HepG2 (cell line): ENCODE measurements at regions of chr7 and their contacts with region 1.

Region 1: GRCh38 chr7:37234928-37235327 is 213.7 kb downstream of the ELMO1 start:
- DNase-seq: peak; percentile 6
- ATAC-seq: 0 out of 3 replicates have a peak, but pooled peaks have one; percentile 33
- H3K4me3 ChIP-seq: no peak overlapping the region
- H3K27ac ChIP-seq: no peak overlapping the region
- H3K4me1 ChIP-seq: no peaks in the 10 kb centered on the region
- H3K27me3 ChIP-seq: peaks cover 0 to 3% of the 10 kb centered on the region in 2 experiments; a peak in 1 of 5 replicates
- CTCF ChIP-seq: peak; percentile 58
- EP300 ChIP-seq: no peak
- POLR2A ChIP-seq: no peak
- RAD21 ChIP-seq: no peak

Region 2: GRCh38 chr7:37247861-37248260 is 12.9 kb after region 1 on chr7:
- CTCF ChIA-PET with region 1: no interaction called
- POLR2A ChIA-PET with region 1: no interaction called
- in situ Hi-C with region 1: no loop called
- intact Hi-C with region 1: no loop called
- DNase-seq: no peak
- ATAC-seq: no peak
- H3K4me3 ChIP-seq: no peak overlapping the region
- H3K27ac ChIP-seq: no peak overlapping the region
- H3K4me1 ChIP-seq: no peaks in the 10 kb centered on the region
- H3K27me3 ChIP-seq: no peaks in the 10 kb centered on the region
- CTCF ChIP-seq: no peak
- EP300 ChIP-seq: no peak
- POLR2A ChIP-seq: no peak
- RAD21 ChIP-seq: no peak

Region 3: GRCh38 chr7:37352974-37353948 is 118.3 kb after region 1 on chr7:
- CTCF ChIA-PET with region 1: no interaction called
- POLR2A ChIA-PET with region 1: no interaction called
- in situ Hi-C with region 1: no loop called
- intact Hi-C with region 1: loop called (anchors 10 kb)
- DNase-seq: no peak
- ATAC-seq: peak; percentile 63
- H3K4me3 ChIP-seq: no peak overlapping the region
- H3K27ac ChIP-seq: no peak overlapping the region
- H3K4me1 ChIP-seq: peaks cover 7% of the 10 kb centered on the region; the same call in 1 of the 2 replicates
- H3K27me3 ChIP-seq: no peaks in the 10 kb centered on the region; a peak in 1 of 5 replicates
- CTCF ChIP-seq: peak; percentile 47
- EP300 ChIP-seq: no peak
- POLR2A ChIP-seq: no peak
- RAD21 ChIP-seq: no peak

Region 4: GRCh38 chr7:37495574-37496184 is 260.8 kb after region 1 on chr7:
- CTCF ChIA-PET with region 1: interaction called, 3 read pairs
- POLR2A ChIA-PET with region 1: no interaction called
- in situ Hi-C with region 1: no loop called
- intact Hi-C with region 1: loop called (anchors 5 kb)
- DNase-seq: peak; percentile 13
- ATAC-seq: no peak
- H3K4me3 ChIP-seq: no peak overlapping the region
- H3K27ac ChIP-seq: no peak overlapping the region
- H3K4me1 ChIP-seq: no peaks in the 10 kb centered on the region
- H3K27me3 ChIP-seq: no peaks in the 10 kb centered on the region
- CTCF ChIP-seq: peak; percentile 48
- EP300 ChIP-seq: no peak
- POLR2A ChIP-seq: no peak
- RAD21 ChIP-seq: no peak

Region 5: DNA sequence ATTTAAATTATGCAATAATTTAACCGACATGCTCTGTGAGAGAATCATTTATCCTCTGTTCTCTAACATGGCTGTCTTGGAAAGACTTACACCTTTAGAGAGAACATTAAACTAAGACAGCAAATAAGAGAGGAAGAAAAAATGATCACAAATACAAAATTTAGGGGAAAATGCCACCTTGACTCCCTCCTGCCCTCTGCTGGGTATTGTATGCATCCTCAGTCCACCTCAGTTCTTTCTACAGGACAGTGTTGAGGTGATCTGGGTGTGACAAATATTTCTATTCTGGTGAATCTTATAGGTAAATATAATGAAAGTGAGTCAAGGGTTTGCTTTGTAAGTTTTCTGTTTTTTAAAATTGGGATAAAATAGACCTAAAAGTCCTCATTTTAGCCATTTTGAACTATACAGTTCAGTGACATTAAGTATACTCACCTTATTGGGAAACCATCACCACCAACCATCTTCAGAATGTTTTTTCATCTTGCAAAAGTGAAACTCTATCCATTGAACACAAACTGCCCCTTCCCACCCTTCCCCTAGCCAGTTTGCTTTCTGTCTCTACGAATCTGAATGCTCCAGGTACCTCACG is 275.2 kb after region 1 on chr7:
- CTCF ChIA-PET with region 1: interaction called, 10 read pairs
- POLR2A ChIA-PET with region 1: no interaction called
- in situ Hi-C with region 1: no loop called
- intact Hi-C with region 1: loop called (anchors 1 kb)
- DNase-seq: peak; percentile 4
- ATAC-seq: peak; percentile 59; the same call in 2 of the 3 replicates
- H3K4me3 ChIP-seq: no peak overlapping the region
- H3K27ac ChIP-seq: no peak overlapping the region
- H3K4me1 ChIP-seq: no peaks in the 10 kb centered on the region
- H3K27me3 ChIP-seq: no peaks in the 10 kb centered on the region; a peak in 1 of 5 replicates
- CTCF ChIP-seq: peak; percentile 57
- EP300 ChIP-seq: no peak
- POLR2A ChIP-seq: no peak
- RAD21 ChIP-seq: no peak

Region 6: DNA sequence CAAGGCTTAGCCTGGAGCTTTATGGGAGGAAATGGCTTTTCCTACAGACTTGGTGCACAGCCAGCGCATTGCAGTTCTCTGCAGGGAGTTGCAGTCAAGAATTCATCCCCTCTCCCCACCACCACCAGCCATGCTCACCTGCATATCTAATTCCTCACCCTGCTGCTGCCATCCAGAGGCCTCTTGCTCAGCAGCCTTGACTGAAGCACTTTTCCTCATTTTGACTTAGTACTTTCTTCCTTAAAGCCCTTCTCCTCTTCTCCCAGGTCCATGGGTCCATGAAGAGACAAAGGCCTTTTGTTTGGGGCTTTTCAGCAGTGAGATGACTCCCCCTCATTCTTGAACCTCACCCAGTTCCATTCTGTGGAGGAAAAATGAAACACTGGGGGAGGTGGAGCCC is 408.9 kb after region 1 on chr7:
- CTCF ChIA-PET with region 1: no interaction called
- POLR2A ChIA-PET with region 1: no interaction called
- in situ Hi-C with region 1: no loop called
- intact Hi-C with region 1: no loop called
- DNase-seq: no peak
- ATAC-seq: no peak
- H3K4me3 ChIP-seq: no peak overlapping the region
- H3K27ac ChIP-seq: no peak overlapping the region
- H3K4me1 ChIP-seq: no peaks in the 10 kb centered on the region
- H3K27me3 ChIP-seq: no peaks in the 10 kb centered on the region
- CTCF ChIP-seq: no peak
- EP300 ChIP-seq: no peak
- POLR2A ChIP-seq: no peak
- RAD21 ChIP-seq: no peak

Region 7: DNA sequence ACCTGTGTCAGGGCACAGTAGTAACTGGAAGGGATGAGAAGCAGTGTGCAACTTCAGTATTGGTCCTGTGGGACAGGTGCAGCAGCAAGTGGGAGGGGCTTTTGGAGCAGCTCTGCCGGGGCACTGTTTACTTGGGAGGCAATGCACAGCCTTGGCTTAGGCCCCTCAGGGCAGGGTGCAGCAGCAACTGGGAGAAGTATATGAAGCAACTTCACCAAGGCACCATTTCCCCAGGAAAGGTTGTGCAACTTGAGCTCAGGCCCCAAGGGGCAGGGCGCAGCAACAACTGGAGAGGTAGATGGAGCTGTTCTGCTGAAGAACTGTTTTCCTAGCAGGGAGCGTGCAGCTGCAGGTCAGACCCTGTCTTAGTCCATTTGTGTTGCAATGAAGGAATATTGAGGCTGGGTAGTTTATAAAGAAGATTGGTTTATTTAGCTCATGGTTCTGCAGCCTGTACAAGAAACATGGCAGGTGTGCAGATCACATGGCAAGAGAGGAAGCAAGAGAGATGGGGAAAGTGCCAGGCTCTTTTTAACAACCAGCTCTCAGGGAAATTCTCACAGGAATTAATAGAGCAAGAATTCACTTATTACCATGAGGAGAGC is 459.3 kb after region 1 on chr7:
- CTCF ChIA-PET with region 1: no interaction called
- POLR2A ChIA-PET with region 1: no interaction called
- in situ Hi-C with region 1: no loop called
- intact Hi-C with region 1: no loop called
- DNase-seq: no peak
- ATAC-seq: peak; percentile 63
- H3K4me3 ChIP-seq: no peak overlapping the region
- H3K27ac ChIP-seq: no peak overlapping the region
- H3K4me1 ChIP-seq: no peaks in the 10 kb centered on the region
- H3K27me3 ChIP-seq: no peaks in the 10 kb centered on the region
- CTCF ChIP-seq: no peak
- EP300 ChIP-seq: no peak
- POLR2A ChIP-seq: no peak
- RAD21 ChIP-seq: no peak

Region 8: GRCh38 chr7:37833107-37833817 is 598.3 kb after region 1 on chr7:
- CTCF ChIA-PET with region 1: no interaction called
- POLR2A ChIA-PET with region 1: no interaction called
- in situ Hi-C with region 1: loop called (anchors 25 kb)
- intact Hi-C with region 1: loop called (anchors 5 kb)
- DNase-seq: peak; percentile 41
- ATAC-seq: no peak; the same call in 2 of the 3 replicates
- H3K4me3 ChIP-seq: peak overlapping the region in 1 of 3 experiments; percentile 40; a peak in 1 of 6 replicates
- H3K27ac ChIP-seq: no peak overlapping the region
- H3K4me1 ChIP-seq: 0 out of 2 replicates have a peak, but pooled peaks cover 4% of the 10 kb centered on the region
- H3K27me3 ChIP-seq: no peaks in the 10 kb centered on the region; a peak in 1 of 5 replicates
- CTCF ChIP-seq: peak; percentile 62
- EP300 ChIP-seq: no peak
- POLR2A ChIP-seq: no peak
- RAD21 ChIP-seq: no peak

Region 9: DNA sequence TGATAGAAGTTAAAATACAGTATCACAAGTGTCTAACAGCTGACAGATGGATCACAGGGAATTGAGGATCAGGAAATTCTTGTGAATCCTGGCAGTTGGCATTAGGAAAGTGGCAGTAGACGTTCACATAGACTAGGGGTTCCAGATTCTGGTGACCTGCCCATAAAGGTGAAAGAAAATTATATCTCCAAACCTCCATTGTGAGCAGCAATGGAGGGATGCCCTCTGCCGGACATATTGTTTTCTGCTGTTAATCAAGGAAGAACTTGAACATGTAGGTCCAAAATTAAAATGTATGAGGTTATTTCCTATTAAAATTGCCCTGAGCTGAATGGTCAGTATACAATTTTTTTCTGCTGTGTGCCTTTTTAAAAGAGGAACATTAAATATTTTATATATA is 618.5 kb after region 1 on chr7:
- CTCF ChIA-PET with region 1: interaction called, 7 read pairs
- POLR2A ChIA-PET with region 1: no interaction called
- in situ Hi-C with region 1: loop called (anchors 25 kb)
- intact Hi-C with region 1: loop called (anchors 2 kb)
- DNase-seq: peak; percentile 12
- ATAC-seq: no peak
- H3K4me3 ChIP-seq: no peak overlapping the region
- H3K27ac ChIP-seq: no peak overlapping the region
- H3K4me1 ChIP-seq: no peaks in the 10 kb centered on the region
- H3K27me3 ChIP-seq: no peaks in the 10 kb centered on the region
- CTCF ChIP-seq: peak; percentile 34
- EP300 ChIP-seq: no peak
- POLR2A ChIP-seq: no peak
- RAD21 ChIP-seq: no peak